Activated naive CD4-positive, alpha-beta T cell treated with anti-CD3 and anti-CD28 coated beads for 36 hours (primary cell): ENCODE measurements at regions of chr6 and their contacts with region 1.

Region 1: GRCh38 chr6:30556066-30556905 is at the start of gene GNL1:
- DNase-seq: peak; percentile 100
- H3K4me3 Mint-ChIP-seq: peak within 1 kb of the TSS; percentile 99
- H3K27ac Mint-ChIP-seq: peak within 1 kb of the TSS; percentile 100
- H3K4me1 Mint-ChIP-seq: peaks cover 38% of the 10 kb centered on the region
- H3K27me3 Mint-ChIP-seq: no peaks in the 10 kb centered on the region
- total RNA-seq, gene GNL1: 78.2 to 82.1 TPM

Region 2: GRCh38 chr6:29872791-29873190 is 683.5 kb before region 1 on chr6:
- CTCF ChIA-PET with region 1: no interaction called
- intact Hi-C with region 1: no loop called
- DNase-seq: no peak
- H3K4me3 Mint-ChIP-seq: no peak overlapping the region
- H3K27ac Mint-ChIP-seq: no peak overlapping the region
- H3K4me1 Mint-ChIP-seq: no peaks in the 10 kb centered on the region
- H3K27me3 Mint-ChIP-seq: no peaks in the 10 kb centered on the region

Region 3: GRCh38 chr6:30326526-30327260 is 229.6 kb before region 1 on chr6 and contains the start of gene TRIM39:
- CTCF ChIA-PET with region 1: no interaction called
- intact Hi-C with region 1: loop called (anchors 2 kb)
- DNase-seq: peak; percentile 87
- H3K4me3 Mint-ChIP-seq: peak within 1 kb of the TSS; percentile 96
- H3K27ac Mint-ChIP-seq: peak within 1 kb of the TSS; percentile 97
- H3K4me1 Mint-ChIP-seq: peaks cover 49% of the 10 kb centered on the region
- H3K27me3 Mint-ChIP-seq: no peaks in the 10 kb centered on the region
- total RNA-seq, gene TRIM39: 14.2 to 14.5 TPM

Region 4: DNA sequence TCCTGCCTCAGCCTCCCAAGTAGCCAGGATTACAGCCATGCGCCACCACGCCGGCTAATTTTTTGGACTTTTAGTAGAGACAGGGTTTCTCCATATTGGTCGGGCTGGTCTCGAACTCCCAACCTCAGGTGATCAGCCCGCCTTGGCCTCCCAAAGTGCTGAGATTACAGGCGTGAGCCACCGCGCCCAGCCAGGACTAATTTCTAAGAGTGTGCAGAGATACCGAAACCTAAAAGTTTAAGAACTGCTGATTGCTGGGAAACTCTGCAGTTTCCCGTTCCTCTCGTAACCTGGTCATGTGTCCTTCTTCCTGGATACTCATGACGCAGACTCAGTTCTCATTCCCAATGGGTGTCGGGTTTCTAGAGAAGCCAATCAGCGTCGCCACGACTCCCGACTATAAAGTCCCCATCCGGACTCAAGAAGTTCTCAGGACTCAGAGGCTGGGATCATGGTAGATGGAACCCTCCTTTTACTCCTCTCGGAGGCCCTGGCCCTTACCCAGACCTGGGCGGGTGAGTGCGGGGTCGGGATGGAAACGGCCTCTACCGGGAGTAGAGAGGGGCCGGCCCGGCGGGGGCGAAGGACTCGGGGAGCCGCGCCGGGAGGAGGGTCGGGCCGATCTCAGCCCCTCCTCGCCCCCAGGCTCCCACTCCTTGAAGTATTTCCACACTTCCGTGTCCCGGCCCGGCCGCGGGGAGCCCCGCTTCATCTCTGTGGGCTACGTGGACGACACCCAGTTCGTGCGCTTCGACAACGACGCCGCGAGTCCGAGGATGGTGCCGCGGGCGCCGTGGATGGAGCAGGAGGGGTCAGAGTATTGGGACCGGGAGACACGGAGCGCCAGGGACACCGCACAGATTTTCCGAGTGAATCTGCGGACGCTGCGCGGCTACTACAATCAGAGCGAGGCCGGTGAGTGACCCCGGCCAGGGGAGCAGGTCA is 66.9 kb before region 1 on chr6 and contains the start of gene HLA-E:
- CTCF ChIA-PET with region 1: interaction called, 36 read pairs
- intact Hi-C with region 1: loop called (anchors 1 kb)
- DNase-seq: peak; percentile 95
- H3K4me3 Mint-ChIP-seq: peak within 1 kb of the TSS; percentile 90
- H3K27ac Mint-ChIP-seq: peak within 1 kb of the TSS; percentile 97
- H3K4me1 Mint-ChIP-seq: peaks cover 54% of the 10 kb centered on the region
- H3K27me3 Mint-ChIP-seq: no peaks in the 10 kb centered on the region
- total RNA-seq, gene HLA-E: 598 to 608 TPM

Region 5: DNA sequence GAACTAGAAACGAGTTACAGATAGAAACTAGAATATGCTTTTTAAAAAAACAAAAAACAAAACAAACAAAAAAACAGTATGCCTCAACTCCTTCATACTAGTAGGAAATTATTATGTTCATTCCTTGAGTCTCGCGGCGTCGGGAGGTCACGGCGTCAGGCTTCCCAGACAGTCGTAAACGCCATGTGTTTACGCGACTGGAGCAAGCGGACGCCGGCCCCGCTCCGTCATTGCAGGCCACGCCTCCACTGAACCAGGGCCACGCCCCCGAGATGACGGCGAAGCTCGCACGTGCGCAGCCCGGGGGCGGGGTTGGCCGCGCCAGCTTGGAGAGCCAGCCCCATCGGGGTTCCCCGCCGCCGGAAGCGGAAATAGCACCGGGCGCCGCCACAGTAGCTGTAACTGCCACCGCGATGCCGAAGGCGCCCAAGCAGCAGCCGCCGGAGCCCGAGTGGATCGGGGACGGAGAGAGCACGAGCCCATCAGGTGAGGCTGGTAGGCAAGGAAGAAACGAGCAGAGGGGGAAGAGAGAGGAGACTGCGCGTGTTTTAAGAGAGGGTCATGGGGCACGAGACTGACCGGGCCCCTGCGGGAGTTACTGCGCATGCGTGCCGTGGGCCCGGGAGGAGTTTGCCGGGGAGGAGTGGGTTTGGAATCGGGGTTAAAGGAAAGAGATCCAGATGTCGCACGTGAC is 14.9 kb after region 1 on chr6 and contains the start of gene ABCF1:
- CTCF ChIA-PET with region 1: interaction called, 7 read pairs
- intact Hi-C with region 1: loop called (anchors 1 kb)
- DNase-seq: peak; percentile 99
- H3K4me3 Mint-ChIP-seq: peak within 1 kb of the TSS; percentile 98
- H3K27ac Mint-ChIP-seq: peak within 1 kb of the TSS; percentile 95
- H3K4me1 Mint-ChIP-seq: peaks cover 70% of the 10 kb centered on the region
- H3K27me3 Mint-ChIP-seq: no peaks in the 10 kb centered on the region
- total RNA-seq, gene ABCF1: 79.5 to 82.7 TPM

Region 6: DNA sequence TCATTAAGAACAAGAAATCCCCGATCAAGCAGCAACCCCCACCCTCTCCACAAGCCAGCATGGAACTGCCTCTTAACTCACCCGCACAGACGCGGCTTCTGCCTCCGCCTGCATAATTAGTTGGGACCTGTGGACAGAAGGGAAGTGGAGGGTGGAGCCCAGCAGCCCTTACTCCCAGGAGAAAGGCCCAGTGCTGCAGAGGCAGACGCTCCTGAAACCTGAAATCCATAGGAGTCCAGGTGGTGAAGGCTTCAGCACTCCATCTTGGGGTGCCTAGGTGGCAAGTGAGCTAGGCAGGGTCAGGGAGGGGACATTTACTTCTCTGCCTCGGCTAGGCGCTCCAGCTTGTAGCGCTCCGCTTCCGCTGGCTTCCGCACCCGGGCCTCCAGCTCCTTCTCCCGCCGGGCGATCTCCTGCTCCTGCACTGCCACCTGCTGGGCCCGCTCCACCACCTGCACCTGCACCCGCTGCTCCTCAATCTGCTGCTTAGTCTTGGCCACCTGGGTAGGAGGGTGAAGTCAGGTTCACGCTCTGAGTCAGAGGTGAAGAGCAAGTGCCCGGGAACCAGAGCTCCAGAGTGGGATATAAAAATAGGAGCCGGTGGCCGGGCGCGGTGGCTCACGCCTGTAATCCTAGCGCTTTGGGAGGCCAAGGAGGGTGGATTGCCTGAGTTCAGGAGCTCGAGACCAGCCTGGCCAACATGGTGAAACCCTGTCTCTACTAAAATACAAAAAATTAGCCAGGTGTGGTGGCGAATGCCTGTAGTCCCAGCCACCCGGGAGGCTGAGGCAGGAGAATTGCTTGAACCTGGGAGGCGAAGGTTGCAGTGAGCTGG is 174.5 kb after region 1 on chr6:
- CTCF ChIA-PET with region 1: no interaction called
- intact Hi-C with region 1: loop called (anchors 5 kb)
- DNase-seq: peak; percentile 94
- H3K4me3 Mint-ChIP-seq: peak overlapping the region; percentile 29
- H3K27ac Mint-ChIP-seq: no peak overlapping the region
- H3K4me1 Mint-ChIP-seq: peaks cover 47% of the 10 kb centered on the region
- H3K27me3 Mint-ChIP-seq: no peaks in the 10 kb centered on the region